ENCODE measurements at regions of chr10 and their contacts with region 1.

Region 1: GRCh38 chr10:133438711-133439273 is 14.4 kb upstream of the SPRN start:
- DNase-seq: no peak
- H3K4me3 Mint-ChIP-seq: no peak overlapping the region
- H3K27ac Mint-ChIP-seq: no peak overlapping the region
- H3K4me1 Mint-ChIP-seq: peaks cover 31% of the 10 kb centered on the region
- H3K27me3 Mint-ChIP-seq: no peaks in the 10 kb centered on the region

Region 2: GRCh38 chr10:133489816-133490588 is 51.2 kb after region 1 on chr10:
- CTCF ChIA-PET with region 1: interaction called, 11 read pairs
- POLR2A ChIA-PET with region 1: no interaction called
- intact Hi-C with region 1: no loop called
- DNase-seq: peak; percentile 29
- H3K4me3 Mint-ChIP-seq: no peak overlapping the region
- H3K27ac Mint-ChIP-seq: no peak overlapping the region
- H3K4me1 Mint-ChIP-seq: peaks cover 7% of the 10 kb centered on the region
- H3K27me3 Mint-ChIP-seq: no peaks in the 10 kb centered on the region

Region 3: GRCh38 chr10:133520155-133520738 is 81.5 kb after region 1 on chr10:
- CTCF ChIA-PET with region 1: interaction called, 35 read pairs
- POLR2A ChIA-PET with region 1: no interaction called
- intact Hi-C with region 1: loop called (anchors 1 kb)
- DNase-seq: peak; percentile 95
- H3K4me3 Mint-ChIP-seq: peak overlapping the region; percentile 63
- H3K27ac Mint-ChIP-seq: peak overlapping the region; percentile 54
- H3K4me1 Mint-ChIP-seq: peaks cover 12% of the 10 kb centered on the region
- H3K27me3 Mint-ChIP-seq: peaks cover 3% of the 10 kb centered on the region

Region 4: GRCh38 chr10:133608855-133609254 is 170.1 kb after region 1 on chr10:
- CTCF ChIA-PET with region 1: interaction called, 31 read pairs
- POLR2A ChIA-PET with region 1: no interaction called
- intact Hi-C with region 1: no loop called
- DNase-seq: no peak
- H3K4me3 Mint-ChIP-seq: no peak overlapping the region
- H3K27ac Mint-ChIP-seq: no peak overlapping the region
- H3K4me1 Mint-ChIP-seq: no peaks in the 10 kb centered on the region
- H3K27me3 Mint-ChIP-seq: peaks cover 39% of the 10 kb centered on the region